Activated CD4-positive, alpha-beta memory T cell treated with anti-CD3 and anti-CD28 coated beads for 36 hours (primary cell): ENCODE measurements at regions of chr5 and their contacts with region 1.

Region 1: GRCh38 chr5:140244525-140245025 is 58.3 kb downstream of the PFDN1 start:
- DNase-seq: peak; percentile 88
- H3K4me3 Mint-ChIP-seq: no peak overlapping the region
- H3K27ac Mint-ChIP-seq: no peak overlapping the region
- H3K4me1 Mint-ChIP-seq: peaks cover 23% of the 10 kb centered on the region
- H3K27me3 Mint-ChIP-seq: no peaks in the 10 kb centered on the region

Region 2: DNA sequence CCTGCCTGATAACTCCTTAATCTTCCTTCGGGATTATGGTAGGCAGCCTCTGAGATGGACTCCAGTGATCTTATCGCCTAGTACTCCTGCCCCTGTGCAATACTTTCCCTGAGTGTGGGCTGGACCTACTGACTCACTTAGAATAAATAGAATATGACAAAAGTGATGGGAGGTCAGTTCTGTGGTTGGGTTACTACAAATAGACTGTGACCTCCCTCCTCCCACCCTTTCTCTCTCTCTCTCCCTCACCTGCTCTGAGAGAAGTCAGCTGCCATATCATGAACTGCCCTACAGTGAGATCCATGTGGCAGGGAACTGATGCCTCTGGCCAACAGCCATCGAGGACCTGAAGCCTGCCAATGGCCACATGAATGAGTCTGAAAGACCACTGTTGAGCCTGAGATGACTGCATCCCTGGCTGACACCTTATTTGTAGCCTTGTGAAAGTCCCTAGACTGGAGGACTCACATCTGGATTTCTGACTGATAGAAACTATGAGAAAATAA is 233.2 kb before region 1 on chr5:
- CTCF ChIA-PET with region 1: no interaction called
- POLR2A ChIA-PET with region 1: no interaction called
- intact Hi-C with region 1: no loop called
- DNase-seq: no peak
- H3K4me3 Mint-ChIP-seq: no peak overlapping the region
- H3K27ac Mint-ChIP-seq: no peak overlapping the region
- H3K4me1 Mint-ChIP-seq: no peaks in the 10 kb centered on the region
- H3K27me3 Mint-ChIP-seq: peaks cover 6% of the 10 kb centered on the region

Region 3: GRCh38 chr5:140261403-140262171 is 17.0 kb after region 1 on chr5:
- CTCF ChIA-PET with region 1: interaction called, 89 read pairs
- POLR2A ChIA-PET with region 1: interaction called, 3 read pairs
- intact Hi-C with region 1: no loop called
- DNase-seq: peak; percentile 51
- H3K4me3 Mint-ChIP-seq: no peak overlapping the region
- H3K27ac Mint-ChIP-seq: peak overlapping the region; percentile 6
- H3K4me1 Mint-ChIP-seq: peaks cover 62% of the 10 kb centered on the region
- H3K27me3 Mint-ChIP-seq: no peaks in the 10 kb centered on the region

Region 4: DNA sequence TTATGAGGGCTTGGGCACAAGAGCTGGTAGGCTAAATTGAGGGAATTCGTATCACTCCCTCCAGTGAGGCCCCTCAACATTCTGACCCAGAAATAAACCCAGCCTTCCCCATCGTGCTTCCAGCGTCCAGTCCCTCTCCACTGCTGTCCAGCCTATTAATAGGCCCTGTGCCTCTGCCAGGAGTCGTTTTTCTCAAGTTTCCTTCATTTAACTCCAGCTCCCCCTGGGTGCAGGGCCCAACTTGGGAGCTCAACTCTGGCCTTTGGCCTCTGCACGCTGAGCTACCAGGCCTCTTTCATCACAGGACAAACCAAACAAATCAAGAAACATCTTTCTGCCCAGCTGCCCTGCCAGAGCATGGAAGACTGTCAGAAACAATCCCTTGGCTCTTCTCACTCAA is 91.8 kb after region 1 on chr5:
- CTCF ChIA-PET with region 1: interaction called, 744 read pairs
- POLR2A ChIA-PET with region 1: no interaction called
- intact Hi-C with region 1: no loop called
- DNase-seq: no peak
- H3K4me3 Mint-ChIP-seq: no peak overlapping the region
- H3K27ac Mint-ChIP-seq: no peak overlapping the region
- H3K4me1 Mint-ChIP-seq: peaks cover 9% of the 10 kb centered on the region
- H3K27me3 Mint-ChIP-seq: no peaks in the 10 kb centered on the region

Region 5: GRCh38 chr5:140357726-140358093 is 113.1 kb after region 1 on chr5:
- CTCF ChIA-PET with region 1: interaction called, 744 read pairs
- POLR2A ChIA-PET with region 1: no interaction called
- intact Hi-C with region 1: loop called (anchors 1 kb)
- DNase-seq: peak; percentile 89
- H3K4me3 Mint-ChIP-seq: peak overlapping the region; percentile 66
- H3K27ac Mint-ChIP-seq: no peak overlapping the region
- H3K4me1 Mint-ChIP-seq: peaks cover 14% of the 10 kb centered on the region
- H3K27me3 Mint-ChIP-seq: peaks cover 5% of the 10 kb centered on the region

Region 6: GRCh38 chr5:140622301-140622700 is 377.7 kb after region 1 on chr5:
- CTCF ChIA-PET with region 1: no interaction called
- POLR2A ChIA-PET with region 1: no interaction called
- intact Hi-C with region 1: no loop called
- DNase-seq: no peak
- H3K4me3 Mint-ChIP-seq: no peak overlapping the region
- H3K27ac Mint-ChIP-seq: no peak overlapping the region
- H3K4me1 Mint-ChIP-seq: no peaks in the 10 kb centered on the region
- H3K27me3 Mint-ChIP-seq: peaks cover 7% of the 10 kb centered on the region

Region 7: GRCh38 chr5:140718241-140718580 is 473.6 kb after region 1 on chr5:
- CTCF ChIA-PET with region 1: interaction called, 14 read pairs
- POLR2A ChIA-PET with region 1: no interaction called
- intact Hi-C with region 1: loop called (anchors 5 kb)
- DNase-seq: no peak
- H3K4me3 Mint-ChIP-seq: no peak overlapping the region
- H3K27ac Mint-ChIP-seq: no peak overlapping the region
- H3K4me1 Mint-ChIP-seq: peaks cover 4% of the 10 kb centered on the region
- H3K27me3 Mint-ChIP-seq: peaks cover 10% of the 10 kb centered on the region